ENCODE measurements at regions of chr2 and their contacts with region 1.

Region 1: GRCh38 chr2:241788572-241788971 is 11.9 kb downstream of the GAL3ST2 start:
- DNase-seq: peak; percentile 75
- H3K4me3 Mint-ChIP-seq: no peak overlapping the region
- H3K27ac Mint-ChIP-seq: peak overlapping the region; percentile 21
- H3K4me1 Mint-ChIP-seq: peaks cover 21% of the 10 kb centered on the region
- H3K27me3 Mint-ChIP-seq: peaks cover 7% of the 10 kb centered on the region

Region 2: DNA sequence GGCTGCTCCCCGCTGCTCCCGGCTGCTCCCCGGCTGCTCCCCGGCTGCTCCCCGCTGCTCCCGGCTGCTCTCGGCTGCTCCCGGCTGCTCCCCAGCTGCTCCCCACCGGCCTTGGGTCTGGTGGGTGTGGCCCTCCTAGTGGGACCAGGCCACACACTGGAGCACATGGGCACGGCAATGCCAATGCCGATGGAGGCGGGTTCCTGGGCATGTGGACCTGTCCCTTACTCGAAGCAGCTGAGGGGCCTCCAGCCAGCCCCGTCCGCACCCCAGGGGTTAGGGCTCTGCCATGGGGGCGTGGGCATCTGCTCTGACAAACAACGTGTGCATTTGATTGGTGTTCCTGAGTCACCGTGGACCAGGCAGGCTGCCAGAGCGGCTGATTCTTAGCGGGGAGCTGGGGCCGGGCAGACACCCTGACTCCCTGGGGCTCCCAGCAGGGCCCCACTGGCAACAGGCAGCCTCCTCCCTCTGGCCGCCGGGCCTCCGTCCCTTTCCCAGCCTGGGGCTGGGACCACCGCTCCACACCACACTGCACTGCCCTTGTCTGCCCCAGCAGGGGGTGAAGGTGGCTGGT is 13.8 kb before region 1 on chr2:
- CTCF ChIA-PET with region 1: no interaction called
- intact Hi-C with region 1: no loop called
- DNase-seq: no peak
- H3K4me3 Mint-ChIP-seq: no peak overlapping the region
- H3K27ac Mint-ChIP-seq: no peak overlapping the region
- H3K4me1 Mint-ChIP-seq: peaks cover 13% of the 10 kb centered on the region
- H3K27me3 Mint-ChIP-seq: peaks cover 3% of the 10 kb centered on the region

Region 3: GRCh38 chr2:241865957-241866789 is 77.6 kb after region 1 on chr2:
- CTCF ChIA-PET with region 1: interaction called, 4 read pairs
- intact Hi-C with region 1: loop called (anchors 2 kb)
- DNase-seq: peak; percentile 63
- H3K4me3 Mint-ChIP-seq: no peak overlapping the region
- H3K27ac Mint-ChIP-seq: no peak overlapping the region
- H3K4me1 Mint-ChIP-seq: peaks cover 69% of the 10 kb centered on the region
- H3K27me3 Mint-ChIP-seq: peaks cover 14% of the 10 kb centered on the region

Measured in activated naive CD4-positive, alpha-beta T cell treated with anti-CD3 and anti-CD28 coated beads for 36 hours (primary cell).